ENCODE measurements at regions of chr12 and their contacts with region 1.

Region 1: GRCh38 chr12:56751712-56752598 is at the start of gene PRIM1:
- DNase-seq: peak; percentile 92
- H3K4me3 ChIP-seq: peak within 1 kb of the TSS; percentile 86
- H3K27ac ChIP-seq: peak within 1 kb of the TSS; percentile 90
- H3K4me1 ChIP-seq: peaks cover 14% of the 10 kb centered on the region
- H3K27me3 ChIP-seq: no peaks in the 10 kb centered on the region
- CTCF ChIP-seq: no peak
- total RNA-seq, gene PRIM1: 51.9 and 66.2 TPM in 2 replicates

Region 2: GRCh38 chr12:56688129-56688845 is 63.7 kb before region 1 on chr12 and contains the start of gene PTGES3:
- CTCF ChIA-PET with region 1: no interaction called
- POLR2A ChIA-PET with region 1: no interaction called
- intact Hi-C with region 1: loop called (anchors 2 kb)
- DNase-seq: peak; percentile 99
- H3K4me3 ChIP-seq: peak within 1 kb of the TSS; percentile 91
- H3K27ac ChIP-seq: peak within 1 kb of the TSS; percentile 100
- H3K4me1 ChIP-seq: peaks cover 9% of the 10 kb centered on the region
- H3K27me3 ChIP-seq: no peaks in the 10 kb centered on the region
- CTCF ChIP-seq: no peak
- total RNA-seq, gene PTGES3: 413 and 450 TPM in 2 replicates

Region 3: GRCh38 chr12:56766535-56766934 is 14.6 kb after region 1 on chr12:
- CTCF ChIA-PET with region 1: interaction called, 14 read pairs
- POLR2A ChIA-PET with region 1: no interaction called
- intact Hi-C with region 1: no loop called
- DNase-seq: no peak
- H3K4me3 ChIP-seq: no peak overlapping the region
- H3K27ac ChIP-seq: no peak overlapping the region
- H3K4me1 ChIP-seq: no peaks in the 10 kb centered on the region
- H3K27me3 ChIP-seq: no peaks in the 10 kb centered on the region
- CTCF ChIP-seq: no peak

Region 4: DNA sequence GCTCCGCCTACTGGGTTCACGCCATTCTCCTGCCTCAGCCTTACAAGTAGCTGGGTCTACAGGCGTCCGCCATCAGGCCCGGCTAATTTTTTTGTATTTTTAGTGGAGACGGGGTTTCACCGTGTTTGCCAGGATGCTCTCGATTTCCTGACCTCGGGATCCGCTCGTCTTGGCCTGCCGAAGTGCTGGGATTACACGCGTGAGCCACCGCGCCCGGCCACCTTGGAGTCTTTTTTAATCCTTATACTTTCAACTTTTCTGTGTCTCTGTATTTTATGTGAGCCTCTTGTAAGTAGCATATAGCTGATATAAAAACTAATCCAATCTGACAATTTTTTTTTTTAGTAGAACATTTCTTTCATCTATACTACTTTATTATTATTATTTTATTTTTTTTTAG is 26.8 kb after region 1 on chr12:
- CTCF ChIA-PET with region 1: no interaction called
- POLR2A ChIA-PET with region 1: no interaction called
- intact Hi-C with region 1: no loop called
- DNase-seq: no peak
- H3K4me3 ChIP-seq: no peak overlapping the region
- H3K27ac ChIP-seq: no peak overlapping the region
- H3K4me1 ChIP-seq: no peaks in the 10 kb centered on the region
- H3K27me3 ChIP-seq: no peaks in the 10 kb centered on the region
- CTCF ChIP-seq: no peak

Region 5: GRCh38 chr12:56987551-56988053 is 235.6 kb after region 1 on chr12:
- CTCF ChIA-PET with region 1: interaction called, 11 read pairs
- POLR2A ChIA-PET with region 1: interaction called, 3 read pairs
- intact Hi-C with region 1: loop called (anchors 1 kb)
- DNase-seq: peak; percentile 80
- H3K4me3 ChIP-seq: no peak overlapping the region
- H3K27ac ChIP-seq: no peak overlapping the region
- H3K4me1 ChIP-seq: peaks cover 6% of the 10 kb centered on the region
- H3K27me3 ChIP-seq: no peaks in the 10 kb centered on the region
- CTCF ChIP-seq: peak; percentile 94

Region 6: DNA sequence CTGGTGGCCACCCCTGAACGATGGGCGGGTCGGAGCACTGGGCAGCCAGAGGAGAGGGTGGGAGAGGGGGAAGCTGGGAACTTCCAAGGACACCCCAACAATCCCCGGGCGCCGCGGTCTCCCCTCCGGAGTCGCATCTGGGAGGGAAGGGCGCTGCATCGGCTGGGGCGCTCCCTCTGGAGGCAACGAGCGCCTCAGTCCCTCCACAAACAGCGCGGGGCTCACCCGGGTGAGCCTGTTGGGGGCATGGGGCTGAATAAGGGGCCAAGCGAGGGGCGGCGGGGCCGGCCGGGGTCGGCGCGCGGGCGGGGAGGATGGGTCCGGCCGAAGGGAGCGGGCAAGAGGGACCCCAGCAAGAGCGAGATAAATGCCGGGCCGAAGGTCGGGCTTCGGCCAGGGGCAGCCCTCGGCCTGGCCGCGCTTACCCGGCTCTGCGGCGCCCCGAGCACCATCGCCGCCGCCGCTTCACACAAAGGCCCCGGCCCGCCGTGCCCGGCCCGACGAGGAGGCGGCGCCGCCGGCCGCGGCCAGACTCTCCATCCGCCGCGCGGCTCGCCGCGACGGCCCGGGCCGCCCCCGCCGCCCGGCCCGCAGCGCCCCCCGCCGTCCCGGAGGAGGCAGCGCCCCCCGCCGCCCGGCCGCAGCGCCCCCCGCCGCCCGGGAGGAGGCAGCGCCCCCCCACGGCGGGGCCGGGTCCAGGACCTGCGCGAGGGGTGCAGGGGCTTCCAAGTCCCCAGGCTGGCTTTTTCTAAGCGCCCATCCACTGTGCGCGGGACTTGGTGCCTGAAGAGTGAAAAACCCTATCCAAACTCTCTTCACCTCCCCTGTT is 254.2 kb after region 1 on chr12 and contains the start of gene ZBTB39:
- CTCF ChIA-PET with region 1: interaction called, 16 read pairs
- POLR2A ChIA-PET with region 1: no interaction called
- intact Hi-C with region 1: no loop called
- DNase-seq: peak; percentile 85
- H3K4me3 ChIP-seq: peak within 1 kb of the TSS; percentile 95
- H3K27ac ChIP-seq: peak within 1 kb of the TSS; percentile 91
- H3K4me1 ChIP-seq: peaks cover 6% of the 10 kb centered on the region
- H3K27me3 ChIP-seq: no peaks in the 10 kb centered on the region
- CTCF ChIP-seq: peak; percentile 65
- total RNA-seq, gene ZBTB39: 17.4 and 18.2 TPM in 2 replicates

Region 7: DNA sequence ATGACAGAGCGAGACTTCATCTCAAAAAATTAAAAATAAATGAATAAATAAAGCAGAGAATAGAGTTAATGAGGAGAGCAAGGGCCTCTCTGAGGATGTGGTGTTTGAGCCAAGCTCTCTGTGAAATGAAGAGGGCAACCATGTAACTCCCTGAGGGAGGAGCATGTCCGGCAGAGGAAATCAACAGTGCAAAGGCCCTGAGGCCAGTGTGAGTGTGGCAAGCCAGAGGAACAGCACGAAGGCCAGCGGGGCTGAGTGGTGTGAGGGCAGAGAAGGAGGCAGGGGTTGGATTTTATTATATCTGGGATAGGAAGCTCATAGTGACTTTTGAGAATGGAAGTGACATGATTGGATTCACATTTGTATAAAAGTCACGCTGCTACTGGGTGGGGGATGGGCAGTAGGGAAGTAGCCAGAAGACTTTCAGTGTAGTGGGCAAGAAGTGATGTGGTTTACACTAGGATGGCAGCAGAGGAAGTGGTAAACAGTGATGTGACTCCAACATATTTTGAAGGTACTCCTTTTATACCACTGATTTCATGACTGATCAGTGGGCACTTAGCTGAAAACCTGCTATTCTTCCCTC is 405.7 kb after region 1 on chr12:
- CTCF ChIA-PET with region 1: interaction called, 13 read pairs
- POLR2A ChIA-PET with region 1: no interaction called
- intact Hi-C with region 1: no loop called
- DNase-seq: no peak
- H3K4me3 ChIP-seq: no peak overlapping the region
- H3K27ac ChIP-seq: no peak overlapping the region
- H3K4me1 ChIP-seq: no peaks in the 10 kb centered on the region
- H3K27me3 ChIP-seq: no peaks in the 10 kb centered on the region
- CTCF ChIP-seq: no peak

Region 8: GRCh38 chr12:57182921-57183790 is 431.2 kb after region 1 on chr12:
- CTCF ChIA-PET with region 1: interaction called, 4 read pairs
- POLR2A ChIA-PET with region 1: no interaction called
- intact Hi-C with region 1: loop called (anchors 10 kb)
- DNase-seq: peak; percentile 79
- H3K4me3 ChIP-seq: no peak overlapping the region
- H3K27ac ChIP-seq: no peak overlapping the region
- H3K4me1 ChIP-seq: no peaks in the 10 kb centered on the region
- H3K27me3 ChIP-seq: no peaks in the 10 kb centered on the region
- CTCF ChIP-seq: peak; percentile 91

Measured in A673 (cell line).